ENCODE measurements at regions of chr17 and their contacts with region 1.

Region 1: GRCh38 chr17:60639019-60639330 is 38.7 kb upstream of the BCAS3 start:
- DNase-seq: no peak
- H3K4me3 ChIP-seq: no peak overlapping the region
- H3K4me3 Mint-ChIP-seq: no peak overlapping the region
- H3K27ac ChIP-seq: no peak overlapping the region
- H3K27ac Mint-ChIP-seq: peak overlapping the region in 1 of 7 donors; percentile 51
- H3K4me1 ChIP-seq: no peaks in the 10 kb centered on the region
- H3K4me1 Mint-ChIP-seq: peaks cover 0 to 11% (median 5%) of the 10 kb centered on the region in 4 donors
- H3K27me3 ChIP-seq: no peaks in the 10 kb centered on the region
- H3K27me3 Mint-ChIP-seq: no peaks in the 10 kb centered on the region

Region 2: DNA sequence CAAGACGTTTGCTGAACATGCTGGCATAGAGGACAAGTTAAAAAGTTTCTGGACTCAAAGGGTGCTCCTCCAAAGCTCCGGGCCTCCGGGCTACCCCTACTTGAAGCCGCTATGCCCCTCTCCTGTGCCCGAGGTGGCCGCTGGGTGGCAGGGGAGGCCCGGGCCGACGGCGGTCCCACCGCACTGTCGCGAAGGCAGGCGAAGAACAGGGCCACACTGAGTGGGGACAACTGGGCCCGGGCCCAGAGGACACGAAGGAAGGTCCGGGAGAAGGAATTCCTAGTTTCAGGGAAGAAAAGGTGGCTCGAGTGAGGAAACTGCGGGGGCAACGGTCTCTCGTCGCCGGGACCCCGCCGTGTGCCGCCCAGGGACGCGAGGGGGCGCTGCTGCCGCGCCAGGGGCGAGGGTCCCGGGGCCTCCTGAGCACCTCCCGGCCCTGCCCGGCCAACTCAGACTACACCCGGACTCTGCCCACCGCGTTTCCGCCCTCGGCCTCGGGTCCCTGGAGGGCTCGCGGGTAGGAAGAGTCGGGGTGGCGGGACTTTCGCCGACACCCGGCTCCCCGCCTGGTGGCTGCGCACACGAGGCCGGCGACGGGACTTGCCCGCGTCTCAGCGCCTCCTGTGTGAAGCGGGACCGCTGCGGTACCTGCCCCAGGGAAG is 217.6 kb before region 1 on chr17:
- CTCF ChIA-PET with region 1: interaction called, 5 read pairs
- POLR2A ChIA-PET with region 1: no interaction called
- intact Hi-C with region 1: loop called (anchors 1 kb)
- DNase-seq: peak; percentile 60 to 73 (median 70)
- H3K4me3 ChIP-seq: peak overlapping the region; percentile 52 to 66
- H3K4me3 Mint-ChIP-seq: peak overlapping the region; percentile 72 to 88 (median 80)
- H3K27ac ChIP-seq: peak overlapping the region; percentile 16
- H3K27ac Mint-ChIP-seq: peak overlapping the region in 6 of 7 donors; percentile 57 to 80 (median 68)
- H3K4me1 ChIP-seq: peaks cover 7% of the 10 kb centered on the region
- H3K4me1 Mint-ChIP-seq: peaks cover 5 to 10% (median 7%) of the 10 kb centered on the region in 4 donors
- H3K27me3 ChIP-seq: no peaks in the 10 kb centered on the region
- H3K27me3 Mint-ChIP-seq: no peaks in the 10 kb centered on the region

Region 3: GRCh38 chr17:60577147-60577915 is 61.6 kb before region 1 on chr17:
- CTCF ChIA-PET with region 1: interaction called, 37 read pairs
- POLR2A ChIA-PET with region 1: no interaction called
- intact Hi-C with region 1: loop called (anchors 1 kb)
- DNase-seq: no peak
- H3K4me3 ChIP-seq: no peak overlapping the region
- H3K4me3 Mint-ChIP-seq: peak overlapping the region; percentile 64 to 84 (median 77)
- H3K27ac ChIP-seq: no peak overlapping the region
- H3K27ac Mint-ChIP-seq: peak overlapping the region in 2 of 7 donors; percentile 32 to 37
- H3K4me1 ChIP-seq: no peaks in the 10 kb centered on the region
- H3K4me1 Mint-ChIP-seq: peaks cover 0 to 5% (median 0%) of the 10 kb centered on the region in 4 donors
- H3K27me3 ChIP-seq: no peaks in the 10 kb centered on the region
- H3K27me3 Mint-ChIP-seq: peaks cover 2% of the 10 kb centered on the region in 2 donors

Region 4: DNA sequence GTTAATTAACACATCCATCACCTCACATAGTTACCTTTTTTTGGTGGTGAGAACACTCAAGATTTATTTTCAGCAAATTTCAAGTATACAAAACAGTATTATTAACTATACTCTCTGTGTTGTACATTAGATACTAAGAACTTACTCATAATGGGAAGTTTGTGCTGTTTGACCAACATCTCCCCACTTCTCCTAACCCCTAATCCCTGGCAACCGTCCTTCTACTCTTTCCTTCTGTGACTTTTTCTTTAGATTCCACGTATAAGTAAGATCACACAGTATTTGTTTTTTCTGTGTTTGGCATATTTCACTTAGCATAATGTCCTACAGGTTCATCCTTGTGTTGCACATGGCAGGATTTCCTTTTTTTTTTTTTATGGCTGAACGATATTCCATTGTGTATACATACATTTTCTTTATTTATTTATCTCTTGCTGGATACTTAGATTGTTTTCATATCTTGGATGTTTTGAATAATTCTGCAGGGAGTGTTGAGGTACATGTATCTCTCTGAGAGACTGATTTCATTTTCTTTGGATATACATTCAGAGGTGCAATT is 20.0 kb before region 1 on chr17:
- CTCF ChIA-PET with region 1: interaction called, 32 read pairs
- POLR2A ChIA-PET with region 1: no interaction called
- intact Hi-C with region 1: no loop called
- DNase-seq: no peak
- H3K4me3 ChIP-seq: no peak overlapping the region
- H3K4me3 Mint-ChIP-seq: peak overlapping the region in 1 of 8 donors; percentile 39
- H3K27ac ChIP-seq: no peak overlapping the region
- H3K27ac Mint-ChIP-seq: peak overlapping the region in 3 of 7 donors; percentile 43 to 72 (median 53)
- H3K4me1 ChIP-seq: no peaks in the 10 kb centered on the region
- H3K4me1 Mint-ChIP-seq: peaks cover 13 to 41% (median 28%) of the 10 kb centered on the region in 4 donors
- H3K27me3 ChIP-seq: no peaks in the 10 kb centered on the region
- H3K27me3 Mint-ChIP-seq: no peaks in the 10 kb centered on the region

Region 5: DNA sequence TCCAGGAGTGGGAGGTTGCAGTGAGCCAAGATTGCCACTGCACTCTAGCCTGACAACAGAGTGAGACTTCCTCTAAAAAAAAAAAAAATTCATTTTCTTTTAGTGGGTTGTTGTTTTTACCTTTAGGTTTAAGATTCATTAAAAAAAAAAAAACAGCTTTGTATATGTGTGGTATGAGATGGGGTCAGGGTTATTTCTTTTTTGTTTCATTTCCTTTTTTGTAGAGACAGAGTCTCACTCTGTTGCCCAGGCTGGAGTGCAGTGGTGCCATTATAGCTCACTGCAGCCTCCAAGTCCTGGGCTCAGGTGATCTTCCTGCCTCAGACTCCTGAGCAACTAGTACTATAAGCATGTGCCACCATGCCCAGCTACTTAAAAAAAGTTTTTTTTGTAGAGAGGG is 85.7 kb after region 1 on chr17:
- CTCF ChIA-PET with region 1: no interaction called
- POLR2A ChIA-PET with region 1: no interaction called
- intact Hi-C with region 1: no loop called
- DNase-seq: no peak
- H3K4me3 ChIP-seq: no peak overlapping the region
- H3K4me3 Mint-ChIP-seq: no peak overlapping the region
- H3K27ac ChIP-seq: no peak overlapping the region
- H3K27ac Mint-ChIP-seq: peak overlapping the region in 1 of 7 donors; percentile 17
- H3K4me1 ChIP-seq: no peaks in the 10 kb centered on the region
- H3K4me1 Mint-ChIP-seq: peaks cover 3 to 4% (median 4%) of the 10 kb centered on the region in 4 donors
- H3K27me3 ChIP-seq: no peaks in the 10 kb centered on the region
- H3K27me3 Mint-ChIP-seq: no peaks in the 10 kb centered on the region